ENCODE measurements at regions of chr7 and their contacts with region 1.

Region 1: DNA sequence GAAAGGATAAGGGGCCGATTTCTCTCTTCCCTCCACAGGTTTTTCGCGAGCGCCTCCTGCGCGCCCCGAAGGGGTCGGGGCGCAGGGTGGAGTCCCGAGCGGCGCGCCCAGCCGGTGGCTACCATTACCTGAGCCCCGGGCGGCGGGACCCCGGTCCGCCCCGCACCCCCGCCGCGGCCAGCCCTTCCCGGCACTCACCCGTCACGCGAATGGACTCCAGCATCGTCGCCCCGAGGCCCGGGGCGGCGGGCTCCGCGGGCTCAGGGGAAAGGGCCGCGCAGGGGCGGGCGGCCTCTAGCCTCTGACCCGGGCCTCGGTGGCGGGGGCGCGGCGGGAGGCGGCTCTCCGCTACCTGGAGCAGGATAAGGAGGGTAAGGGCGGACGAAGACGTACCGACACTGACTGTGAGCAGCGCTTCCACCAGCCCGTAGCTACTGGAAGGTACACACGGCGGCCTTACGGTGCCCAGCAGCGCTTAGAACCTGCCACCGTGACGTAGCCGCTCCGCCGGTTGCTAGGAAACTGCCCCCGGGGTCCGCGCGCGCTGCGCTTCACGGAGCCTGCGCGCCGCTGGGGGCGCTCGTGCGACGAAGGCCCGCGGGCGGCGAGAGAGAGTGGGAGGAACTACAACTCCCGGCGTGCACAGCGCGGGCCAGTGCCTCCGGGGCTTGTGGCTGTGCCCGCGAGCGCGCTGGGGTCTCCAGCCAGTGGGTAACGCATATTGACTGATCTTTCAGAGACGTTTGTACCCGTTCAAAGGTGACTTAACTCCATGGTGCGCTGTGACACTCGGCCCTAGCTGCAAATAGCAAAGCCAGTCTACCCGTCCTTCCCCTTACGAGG is 22.7 kb upstream of the ANLN start:
- DNase-seq: peak; percentile 86
- H3K4me3 ChIP-seq: peak overlapping the region; percentile 75 to 98 (median 80)
- H3K27ac ChIP-seq: peak overlapping the region; percentile 86
- H3K4me1 ChIP-seq: peaks cover 11% of the 10 kb centered on the region
- H3K27me3 ChIP-seq: no peaks in the 10 kb centered on the region
- CTCF ChIP-seq: peak; percentile 74 to 90

Region 2: GRCh38 chr7:36389371-36390198 is 22.6 kb after region 1 on chr7 and contains the start of gene ANLN:
- CTCF ChIA-PET with region 1: interaction called, 6 read pairs
- dilution Hi-C with region 1: no loop called
- in situ Hi-C with region 1: no loop called
- intact Hi-C with region 1: loop called (anchors 1 kb)
- DNase-seq: peak; percentile 96
- H3K4me3 ChIP-seq: peak within 1 kb of the TSS; percentile 88 to 94 (median 90)
- H3K27ac ChIP-seq: peak within 1 kb of the TSS; percentile 100
- H3K4me1 ChIP-seq: peaks cover 39% of the 10 kb centered on the region
- H3K27me3 ChIP-seq: no peaks in the 10 kb centered on the region
- CTCF ChIP-seq: no peak
- total RNA-seq, gene ANLN: 7.7 to 113 TPM